Left cardiac atrium (tissue), 4 donors: ENCODE measurements at regions of chr13 and their contacts with region 1.

Region 1: GRCh38 chr13:103130681-103131210 is 64.5 kb upstream of the SLC10A2 start:
- DNase-seq: no peak
- ATAC-seq: no peak

Region 2: GRCh38 chr13:101757446-101758039 is 1373.2 kb before region 1 on chr13:
- intact Hi-C with region 1: no loop called
- DNase-seq: no peak
- ATAC-seq: peak; percentile 41 to 51

Region 3: GRCh38 chr13:102947745-102948405 is 182.9 kb before region 1 on chr13:
- intact Hi-C with region 1: loop called in 1 of 2 experiments (anchors 10 kb)
- DNase-seq: no peak
- ATAC-seq: peak; percentile 47 to 55